Left ventricle myocardium superior (tissue), 1 donor: ENCODE measurements at regions of chr6 and their contacts with region 1.

Region 1: DNA sequence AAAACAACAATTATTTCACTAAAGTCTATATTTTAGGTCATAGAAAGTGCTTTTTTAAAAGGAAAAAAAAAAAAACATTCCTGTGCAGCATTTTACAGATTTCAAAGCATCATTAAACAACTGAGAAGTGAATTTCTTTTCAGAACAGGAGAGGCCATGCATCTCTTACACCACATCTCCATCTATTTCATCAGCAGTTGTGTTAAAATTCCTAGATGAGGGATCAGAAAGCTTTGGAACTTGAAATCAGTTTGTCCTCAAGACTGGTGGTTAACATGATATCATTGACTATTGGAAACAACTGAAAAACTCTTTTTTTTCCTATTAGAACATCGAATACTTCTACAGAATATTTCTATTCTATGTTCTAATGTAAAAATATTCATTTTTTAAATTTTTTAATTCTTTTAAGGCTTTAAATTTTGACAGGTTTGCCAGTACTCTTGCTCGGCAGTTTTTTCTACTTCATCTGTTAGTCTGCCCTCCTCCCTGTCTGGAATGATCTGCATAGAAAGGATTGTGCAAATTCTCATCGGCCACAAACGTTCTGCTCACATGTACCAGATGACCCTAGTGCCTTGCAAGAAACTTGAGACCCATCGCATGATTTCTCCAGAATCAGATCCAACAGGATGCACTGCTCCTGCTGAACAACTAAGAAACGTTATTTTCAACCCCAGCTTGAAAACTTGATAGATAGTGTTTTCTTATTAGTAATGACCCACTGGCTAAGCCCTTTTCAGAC is 411.0 kb upstream of the AGPAT4 start:
- DNase-seq: no peak
- ATAC-seq: no peak

Region 2: DNA sequence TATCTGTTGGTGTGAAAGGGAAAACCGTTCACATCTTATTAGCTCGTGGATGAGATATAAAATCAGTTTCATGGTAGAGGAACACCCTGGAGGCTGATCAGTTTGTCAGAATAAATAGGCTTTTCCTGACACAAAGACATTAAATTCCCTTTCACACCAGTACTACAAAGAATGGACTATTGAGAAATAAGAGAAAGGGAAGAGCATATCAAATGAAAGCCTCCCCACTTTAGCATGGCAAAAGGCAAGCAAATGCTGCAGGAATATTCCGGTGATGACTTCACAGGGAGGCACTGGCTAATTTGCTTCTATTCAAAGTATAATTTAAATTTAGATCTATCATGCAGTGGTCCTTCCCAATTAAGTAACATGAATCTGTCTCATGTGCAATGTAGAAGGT is 295.1 kb before region 1 on chr6:
- intact Hi-C with region 1: loop called (anchors 5 kb)
- DNase-seq: no peak
- ATAC-seq: no peak

Region 3: DNA sequence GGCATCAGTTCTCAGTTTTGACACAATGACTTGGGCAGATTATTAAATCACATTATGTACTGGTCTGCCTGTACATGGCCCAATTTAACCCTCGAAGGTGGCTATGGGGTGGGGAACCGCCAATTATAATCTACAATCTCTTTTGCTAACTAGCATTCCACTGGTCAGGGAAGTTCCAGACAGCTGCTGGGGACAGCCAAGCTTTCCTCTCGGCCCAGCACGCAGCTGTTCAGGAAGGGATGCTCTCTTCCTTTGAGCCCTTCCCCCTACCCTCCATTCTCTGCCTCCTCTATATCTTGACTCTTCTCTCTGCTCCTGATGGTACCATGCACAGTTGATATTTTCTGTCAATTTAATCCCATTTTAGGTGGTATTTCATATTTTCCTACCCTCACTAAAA is 177.5 kb before region 1 on chr6:
- intact Hi-C with region 1: no loop called
- DNase-seq: no peak
- ATAC-seq: no peak